Mammary epithelial cell (primary cell): ENCODE measurements at regions of chr17 and their contacts with region 1.

Region 1: DNA sequence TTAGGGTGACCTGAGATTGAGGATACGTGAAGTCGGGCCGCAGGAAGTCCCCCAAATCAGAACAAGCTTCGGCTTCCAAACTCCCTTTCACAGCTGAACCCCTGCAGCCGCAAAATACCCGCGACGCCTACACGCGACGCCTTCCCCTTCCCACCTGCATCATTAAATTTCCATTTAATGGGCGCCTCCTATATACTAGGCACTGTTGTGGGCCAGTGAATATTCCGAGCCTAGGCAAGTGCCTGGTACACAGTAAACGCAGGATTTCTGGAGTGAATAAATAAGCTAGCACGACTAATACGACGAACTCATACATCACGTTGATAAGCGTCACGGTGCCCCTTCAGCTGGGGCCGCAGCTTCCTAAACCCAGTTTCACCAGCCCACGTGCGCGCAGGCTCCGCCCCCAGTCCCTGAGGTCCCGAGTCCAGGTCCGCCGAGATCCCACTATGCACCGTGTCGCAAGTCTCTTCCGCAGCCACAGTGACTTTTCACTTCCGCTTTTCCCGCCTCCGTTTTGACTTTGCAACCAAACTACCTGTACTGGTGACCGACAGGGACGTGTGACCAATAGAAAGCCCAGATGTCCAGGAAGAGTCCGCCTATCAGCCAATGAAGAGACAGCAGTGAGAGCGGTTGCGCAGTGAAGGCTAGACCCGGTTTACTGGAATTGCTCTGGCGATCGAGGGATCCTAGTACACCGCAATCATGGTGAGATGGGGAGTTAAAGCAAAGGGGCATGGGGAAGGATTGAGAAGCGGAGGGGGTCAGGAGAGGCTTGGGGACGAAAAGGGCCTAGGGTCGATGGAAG is at the start of gene PSMB3:
- DNase-seq: peak; percentile 99
- H3K4me3 ChIP-seq: peak within 1 kb of the TSS; percentile 81 to 96 (median 94)
- H3K27ac ChIP-seq: peak within 1 kb of the TSS; percentile 78
- H3K4me1 ChIP-seq: peaks cover 33% of the 10 kb centered on the region
- H3K27me3 ChIP-seq: no peaks in the 10 kb centered on the region
- CTCF ChIP-seq: no peak
- total RNA-seq, gene PSMB3: 150 to 218 TPM

Region 2: DNA sequence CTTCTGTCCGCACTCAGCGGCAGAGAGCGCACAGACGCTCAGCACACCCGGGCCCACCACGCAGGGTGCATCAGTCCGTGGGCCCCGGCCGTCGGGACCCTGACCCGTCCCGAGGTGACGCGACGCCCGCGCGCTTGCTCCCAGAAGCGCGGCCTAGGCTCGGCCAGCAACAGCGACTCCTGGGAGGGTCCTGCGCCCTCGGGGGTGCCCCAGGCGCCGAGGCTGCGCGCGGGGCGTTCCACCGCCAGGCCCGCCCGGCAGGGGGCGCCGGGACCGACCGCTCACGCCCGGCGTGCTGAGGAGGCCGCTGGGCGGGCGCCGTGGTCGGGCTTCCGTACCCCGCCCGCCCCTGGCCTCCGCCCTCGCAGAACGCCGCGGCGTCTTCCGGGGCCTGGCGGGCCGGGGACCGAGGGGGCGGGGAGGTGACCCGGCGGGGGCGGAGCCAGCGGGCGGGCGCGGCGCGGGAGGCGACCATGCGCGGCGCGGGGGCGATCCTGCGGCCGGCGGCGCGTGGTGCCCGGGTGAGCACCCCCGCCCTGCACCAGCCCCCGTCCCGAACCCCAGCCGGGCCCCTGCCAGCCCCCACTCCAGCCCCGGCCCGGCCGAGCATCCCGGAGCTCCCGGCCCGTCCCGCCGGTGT is 22.3 kb before region 1 on chr17 and contains the start of gene CISD3:
- CTCF ChIA-PET with region 1: no interaction called
- dilution Hi-C with region 1: no loop called
- in situ Hi-C with region 1: no loop called
- intact Hi-C with region 1: loop called (anchors 1 kb)
- DNase-seq: peak; percentile 74
- H3K4me3 ChIP-seq: peak within 1 kb of the TSS; percentile 65 to 79 (median 68)
- H3K27ac ChIP-seq: peak within 1 kb of the TSS; percentile 41
- H3K4me1 ChIP-seq: peaks cover 12% of the 10 kb centered on the region
- H3K27me3 ChIP-seq: no peaks in the 10 kb centered on the region
- CTCF ChIP-seq: peak; percentile 40 to 44
- total RNA-seq, gene CISD3: 3.3 to 30.4 TPM

Region 3: DNA sequence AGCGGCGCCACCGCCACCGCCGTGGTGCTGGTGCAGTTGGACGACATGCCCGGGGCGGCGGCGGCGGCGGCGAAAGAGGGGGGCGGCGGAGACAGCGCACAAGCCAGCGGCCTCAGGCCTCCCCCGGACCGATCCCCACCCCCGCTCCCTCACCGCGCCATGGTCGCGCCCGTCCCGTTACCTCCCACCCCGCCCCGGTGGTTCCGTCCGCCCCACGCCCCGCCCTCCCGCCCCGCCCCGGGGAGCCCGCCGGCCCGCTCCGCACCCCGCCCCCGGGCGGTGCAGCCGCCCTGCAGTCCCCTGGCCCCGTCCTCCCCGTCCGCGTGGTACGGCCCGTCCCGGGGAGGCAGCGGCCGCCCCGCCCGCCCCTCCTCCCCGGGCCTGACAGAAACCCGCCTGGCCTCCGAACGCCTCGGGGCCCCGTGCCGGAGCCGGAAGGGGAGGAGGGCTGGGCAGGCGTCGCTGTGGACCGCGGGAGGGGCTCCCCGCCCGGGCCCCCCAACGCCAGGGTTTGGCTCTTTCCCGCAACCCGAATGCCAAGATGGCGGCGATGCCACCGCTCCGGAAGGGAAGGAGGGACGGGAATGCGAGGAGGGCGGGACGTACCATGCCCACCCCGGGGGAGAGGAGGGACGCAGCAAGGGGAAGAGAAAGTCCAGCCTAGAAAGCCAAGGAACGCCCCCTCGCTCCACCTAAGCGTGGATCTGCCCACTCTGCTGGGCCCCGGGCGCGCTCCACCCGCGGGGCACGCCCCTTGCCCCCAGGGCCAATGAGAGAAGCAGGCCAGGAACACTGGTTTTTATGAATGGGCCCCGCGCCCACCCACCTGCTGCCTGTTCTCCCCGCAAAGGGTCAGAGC is 47.3 kb after region 1 on chr17 and contains the start of gene PIP4K2B:
- CTCF ChIA-PET with region 1: no interaction called
- dilution Hi-C with region 1: loop called (anchors 5 kb)
- in situ Hi-C with region 1: no loop called
- intact Hi-C with region 1: loop called (anchors 5 kb)
- DNase-seq: peak; percentile 95
- H3K4me3 ChIP-seq: peak within 1 kb of the TSS; percentile 73 to 95 (median 86)
- H3K27ac ChIP-seq: peak within 1 kb of the TSS; percentile 85
- H3K4me1 ChIP-seq: peaks cover 17% of the 10 kb centered on the region
- H3K27me3 ChIP-seq: no peaks in the 10 kb centered on the region
- CTCF ChIP-seq: no peak
- total RNA-seq, gene PIP4K2B: 34.6 to 55.7 TPM